ENCODE measurements at regions of chr3 and their contacts with region 1.

Region 1: GRCh38 chr3:9986237-9986725 is 360 bp downstream of the EMC3 start:
- DNase-seq: no peak
- H3K4me3 ChIP-seq: peak overlapping the region; percentile 97
- H3K27ac ChIP-seq: peak overlapping the region; percentile 61
- H3K27me3 ChIP-seq: no peaks in the 10 kb centered on the region
- CTCF ChIP-seq: no peak

Region 2: GRCh38 chr3:10010486-10011465 is 24.5 kb after region 1 on chr3:
- CTCF ChIA-PET with region 1: no interaction called
- POLR2A ChIA-PET with region 1: interaction called, 11 read pairs
- DNase-seq: peak; percentile 55
- H3K4me3 ChIP-seq: peak overlapping the region; percentile 78
- H3K27ac ChIP-seq: no peak overlapping the region
- H3K27me3 ChIP-seq: no peaks in the 10 kb centered on the region
- CTCF ChIP-seq: no peak

Region 3: GRCh38 chr3:10122724-10123123 is 136.4 kb after region 1 on chr3:
- CTCF ChIA-PET with region 1: no interaction called
- POLR2A ChIA-PET with region 1: interaction called, 10 read pairs
- DNase-seq: no peak
- H3K4me3 ChIP-seq: no peak overlapping the region
- H3K27ac ChIP-seq: no peak overlapping the region
- H3K27me3 ChIP-seq: no peaks in the 10 kb centered on the region
- CTCF ChIP-seq: no peak

Measured in AG04450 (cell line).